ENCODE measurements at regions of chr17 and their contacts with region 1.

Region 1: GRCh38 chr17:2253768-2254406 is 49.7 kb downstream of the SMG6 start:
- DNase-seq: peak; percentile 90
- ATAC-seq: peak; percentile 97
- H3K4me3 ChIP-seq: peak overlapping the region; percentile 36; the same call in 1 of the 2 replicates
- H3K27ac ChIP-seq: peak overlapping the region; percentile 90
- H3K4me1 ChIP-seq: peaks cover 36% of the 10 kb centered on the region
- H3K27me3 ChIP-seq: no peaks in the 10 kb centered on the region
- CTCF ChIP-seq: no peak
- EP300 ChIP-seq: peak; percentile 91 to 95
- POLR2A ChIP-seq: peak; percentile 37; the same call in 1 of the 2 replicates
- RAD21 ChIP-seq: peak; percentile 12; the same call in 1 of the 2 replicates

Region 2: DNA sequence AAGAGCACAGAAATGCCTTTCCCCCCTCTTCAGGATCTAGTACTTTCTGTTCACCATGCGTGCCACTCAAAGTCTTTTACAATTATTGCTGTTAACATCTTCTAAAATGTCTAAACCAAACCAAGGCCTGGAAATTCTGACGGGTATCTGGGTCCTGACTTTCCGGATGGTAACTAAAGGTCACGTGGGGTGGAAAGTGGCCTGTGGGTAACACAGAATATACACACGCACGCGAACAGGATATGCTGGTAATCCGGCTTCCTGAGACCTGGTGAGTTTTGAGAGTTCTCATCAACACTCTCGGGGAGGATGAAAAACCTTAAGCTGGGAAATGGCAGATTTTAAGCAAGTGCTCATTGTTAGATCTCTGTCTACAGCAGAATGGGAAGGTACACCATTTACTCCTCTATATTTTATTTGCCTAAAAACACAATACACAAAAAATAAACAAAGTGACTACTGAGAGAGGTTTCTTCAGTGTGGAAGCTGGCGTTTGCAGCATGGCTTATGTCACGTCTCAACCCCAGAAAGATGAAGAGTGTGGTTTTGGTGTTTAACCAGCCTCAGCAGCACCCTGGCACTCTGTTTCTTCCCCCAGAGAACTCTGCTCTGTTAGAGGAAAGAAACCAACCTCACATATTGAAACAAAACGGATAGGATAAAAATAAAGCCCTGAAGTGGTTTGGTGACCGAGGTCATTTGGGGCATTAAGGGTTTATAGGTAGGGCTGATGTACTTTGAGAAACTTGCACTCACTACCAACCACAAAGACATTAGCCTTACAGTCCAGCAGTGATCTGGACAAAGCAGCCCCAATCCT is 12.4 kb after region 1 on chr17:
- CTCF ChIA-PET with region 1: interaction called, 48 read pairs
- POLR2A ChIA-PET with region 1: interaction called, 37 read pairs
- RAD21 ChIA-PET with region 1: interaction called, 38 read pairs
- SMC1A ChIA-PET with region 1: interaction called, 149 read pairs
- in situ Hi-C with region 1: no loop called
- intact Hi-C with region 1: no loop called
- DNase-seq: peak; percentile 97
- ATAC-seq: peak; percentile 90
- H3K4me3 ChIP-seq: peak overlapping the region; percentile 28; the same call in 1 of the 2 replicates
- H3K27ac ChIP-seq: peak overlapping the region; percentile 99
- H3K4me1 ChIP-seq: peaks cover 61% of the 10 kb centered on the region
- H3K27me3 ChIP-seq: no peaks in the 10 kb centered on the region
- CTCF ChIP-seq: no peak
- EP300 ChIP-seq: peak; percentile 58 to 87; a peak in 3 of 4 replicates
- POLR2A ChIP-seq: peak; percentile 64
- RAD21 ChIP-seq: peak; percentile 16; the same call in 1 of the 2 replicates

Measured in GM12878 (cell line).